PC-3 (cell line): ENCODE measurements at regions of chr1 and their contacts with region 1.

Region 1: DNA sequence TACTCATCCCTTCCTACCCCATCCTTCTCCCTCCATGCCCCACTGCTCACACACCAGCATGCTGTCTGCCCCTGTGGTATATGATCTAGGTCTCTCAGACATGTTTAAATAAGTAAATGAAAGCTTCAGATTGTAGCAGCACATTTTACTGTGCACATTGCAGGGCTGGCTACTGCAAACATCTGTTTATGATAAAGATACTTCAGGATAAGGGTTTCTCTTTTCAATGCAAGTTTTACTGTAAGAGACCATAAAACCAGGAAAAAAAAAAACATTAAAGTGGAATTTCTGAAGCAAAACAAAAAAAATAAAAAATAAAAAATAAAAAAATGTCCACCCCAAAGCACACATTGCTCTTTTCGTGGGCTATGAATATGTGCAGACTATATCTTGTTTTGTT is 184.4 kb downstream of the USH2A start:
- DNase-seq: no peak
- ATAC-seq: no peak
- H3K4me3 ChIP-seq: no peak overlapping the region
- H3K27ac ChIP-seq: no peak overlapping the region
- H3K4me1 ChIP-seq: peaks cover 14% of the 10 kb centered on the region
- H3K27me3 ChIP-seq: peaks cover 10% of the 10 kb centered on the region; the same call in 1 of the 2 replicates
- CTCF ChIP-seq: no peak

Region 2: DNA sequence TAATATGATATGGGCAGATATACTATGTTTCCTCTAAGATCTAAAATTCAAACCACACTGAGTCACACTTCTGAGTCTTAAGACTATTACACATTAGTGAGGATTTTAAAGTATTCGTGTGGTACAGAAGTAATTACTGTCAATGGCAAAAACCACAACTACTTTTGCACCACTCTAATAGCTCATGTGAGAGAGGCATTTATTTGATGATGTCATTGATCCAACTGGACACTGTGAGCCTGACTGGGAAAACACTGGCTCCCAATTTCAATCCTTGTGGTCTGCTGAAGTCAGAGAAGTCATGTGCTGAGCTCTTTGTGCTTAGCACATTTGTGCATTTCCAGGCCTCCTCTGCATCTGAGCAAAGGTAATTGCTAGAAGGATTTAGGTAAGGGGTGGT is 193.4 kb before region 1 on chr1:
- CTCF ChIA-PET with region 1: no interaction called
- POLR2A ChIA-PET with region 1: no interaction called
- intact Hi-C with region 1: no loop called
- DNase-seq: peak; percentile 45
- ATAC-seq: peak; percentile 40
- H3K4me3 ChIP-seq: no peak overlapping the region
- H3K27ac ChIP-seq: no peak overlapping the region
- H3K4me1 ChIP-seq: no peaks in the 10 kb centered on the region
- H3K27me3 ChIP-seq: peaks cover 35% of the 10 kb centered on the region
- CTCF ChIP-seq: no peak

Region 3: DNA sequence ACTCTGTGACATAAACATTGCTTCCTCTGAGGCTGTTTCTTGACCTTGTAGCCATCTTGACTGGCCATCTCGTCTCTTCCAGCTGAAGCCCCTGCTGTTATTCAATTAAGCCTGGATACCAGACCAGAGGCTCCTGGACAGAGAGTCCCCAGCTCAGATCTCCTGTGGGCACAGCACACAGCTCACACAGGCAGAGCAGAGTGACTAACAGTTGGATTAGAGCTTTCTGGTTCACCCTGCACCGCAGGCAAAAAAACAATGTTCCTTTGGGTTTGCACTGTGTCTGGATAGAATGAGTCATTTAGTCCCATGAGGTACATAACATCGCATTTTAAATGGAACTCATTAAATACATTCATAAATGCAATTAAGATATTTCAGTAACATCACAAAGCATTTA is 217.8 kb after region 1 on chr1:
- CTCF ChIA-PET with region 1: no interaction called
- POLR2A ChIA-PET with region 1: no interaction called
- intact Hi-C with region 1: loop called (anchors 2 kb)
- DNase-seq: peak; percentile 97
- ATAC-seq: peak; percentile 95
- H3K4me3 ChIP-seq: no peak overlapping the region
- H3K27ac ChIP-seq: peak overlapping the region; percentile 24
- H3K4me1 ChIP-seq: peaks cover 44% of the 10 kb centered on the region
- H3K27me3 ChIP-seq: no peaks in the 10 kb centered on the region
- CTCF ChIP-seq: no peak

Region 4: GRCh38 chr1:216502528-216503162 is 263.8 kb after region 1 on chr1:
- CTCF ChIA-PET with region 1: no interaction called
- POLR2A ChIA-PET with region 1: interaction called, 12 read pairs
- intact Hi-C with region 1: no loop called
- DNase-seq: no peak
- ATAC-seq: no peak
- H3K4me3 ChIP-seq: no peak overlapping the region
- H3K27ac ChIP-seq: no peak overlapping the region
- H3K4me1 ChIP-seq: no peaks in the 10 kb centered on the region
- H3K27me3 ChIP-seq: peaks cover 8% of the 10 kb centered on the region; the same call in 1 of the 2 replicates
- CTCF ChIP-seq: no peak